ENCODE measurements at regions of chr1 and their contacts with region 1.

Region 1: GRCh38 chr1:156689035-156689952 is 12.1 kb upstream of the NES start:
- DNase-seq: peak; percentile 83
- H3K4me3 Mint-ChIP-seq: no peak overlapping the region
- H3K27ac Mint-ChIP-seq: no peak overlapping the region
- H3K4me1 Mint-ChIP-seq: peaks cover 16% of the 10 kb centered on the region
- H3K27me3 Mint-ChIP-seq: peaks cover 55% of the 10 kb centered on the region

Region 2: GRCh38 chr1:156394835-156395461 is 294.3 kb before region 1 on chr1:
- CTCF ChIA-PET with region 1: no interaction called
- POLR2A ChIA-PET with region 1: no interaction called
- intact Hi-C with region 1: no loop called
- DNase-seq: no peak
- H3K4me3 Mint-ChIP-seq: no peak overlapping the region
- H3K27ac Mint-ChIP-seq: no peak overlapping the region
- H3K4me1 Mint-ChIP-seq: no peaks in the 10 kb centered on the region
- H3K27me3 Mint-ChIP-seq: peaks cover 2% of the 10 kb centered on the region

Region 3: GRCh38 chr1:156625436-156626078 is 63.7 kb before region 1 on chr1:
- CTCF ChIA-PET with region 1: interaction called, 34 read pairs
- POLR2A ChIA-PET with region 1: no interaction called
- intact Hi-C with region 1: no loop called
- DNase-seq: peak; percentile 64
- H3K4me3 Mint-ChIP-seq: peak overlapping the region; percentile 48
- H3K27ac Mint-ChIP-seq: no peak overlapping the region
- H3K4me1 Mint-ChIP-seq: peaks cover 10% of the 10 kb centered on the region
- H3K27me3 Mint-ChIP-seq: peaks cover 46% of the 10 kb centered on the region

Region 4: DNA sequence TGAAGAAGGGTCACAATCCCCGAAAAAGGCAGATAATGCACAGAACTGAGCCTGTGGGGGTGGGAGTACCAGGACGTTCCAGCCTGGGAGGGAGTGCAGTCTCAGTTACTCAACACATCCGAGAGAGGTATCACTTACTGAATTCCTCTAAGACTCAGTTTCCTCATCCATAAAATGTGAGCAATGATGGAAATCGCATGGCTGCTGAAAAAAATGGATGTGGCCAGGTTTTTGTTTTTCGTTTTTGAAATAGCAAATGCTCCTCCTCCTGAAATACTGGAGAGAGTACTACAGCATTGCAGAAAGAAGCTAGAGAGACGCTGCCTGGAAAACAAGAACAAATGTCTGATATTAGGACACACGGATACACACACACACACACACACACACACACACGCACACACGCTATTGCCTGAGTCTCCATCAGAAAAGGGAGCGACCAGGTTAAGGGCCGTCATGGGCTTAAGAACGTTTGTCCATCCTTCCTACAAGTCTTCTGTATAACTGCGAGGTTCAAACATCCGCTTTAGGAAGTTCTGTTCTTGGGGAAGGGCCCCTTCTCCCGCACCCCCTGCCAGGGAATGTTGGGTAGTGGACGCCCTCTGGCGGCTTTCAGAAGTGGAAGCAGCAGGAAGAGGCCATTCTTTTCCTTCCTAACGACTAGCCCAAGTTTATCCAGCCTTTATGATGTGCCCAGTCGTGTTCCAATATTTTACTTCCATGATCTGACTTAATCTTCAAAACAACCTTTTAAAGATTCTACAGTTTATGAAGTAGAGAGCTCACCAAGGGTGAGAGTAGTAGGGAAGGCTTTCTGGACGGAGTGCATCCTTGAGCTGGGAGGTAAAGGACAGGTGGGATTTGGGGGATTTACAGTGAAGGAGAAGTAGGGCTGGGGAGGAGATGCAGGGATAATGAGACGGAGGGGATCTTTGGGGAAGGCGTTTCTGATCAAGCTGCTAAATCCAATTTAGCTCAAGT is 11.4 kb before region 1 on chr1:
- CTCF ChIA-PET with region 1: interaction called, 37 read pairs
- POLR2A ChIA-PET with region 1: no interaction called
- intact Hi-C with region 1: no loop called
- DNase-seq: peak; percentile 44
- H3K4me3 Mint-ChIP-seq: no peak overlapping the region
- H3K27ac Mint-ChIP-seq: no peak overlapping the region
- H3K4me1 Mint-ChIP-seq: peaks cover 12% of the 10 kb centered on the region
- H3K27me3 Mint-ChIP-seq: peaks cover 56% of the 10 kb centered on the region

Region 5: GRCh38 chr1:156740679-156741612 is 51.7 kb after region 1 on chr1 and contains the start of gene MRPL24:
- CTCF ChIA-PET with region 1: interaction called, 11 read pairs
- POLR2A ChIA-PET with region 1: no interaction called
- intact Hi-C with region 1: no loop called
- DNase-seq: peak; percentile 98
- H3K4me3 Mint-ChIP-seq: peak within 1 kb of the TSS; percentile 89
- H3K27ac Mint-ChIP-seq: peak within 1 kb of the TSS; percentile 95
- H3K4me1 Mint-ChIP-seq: peaks cover 47% of the 10 kb centered on the region
- H3K27me3 Mint-ChIP-seq: no peaks in the 10 kb centered on the region
- total RNA-seq, gene MRPL24: 105 to 106 TPM

Region 6: DNA sequence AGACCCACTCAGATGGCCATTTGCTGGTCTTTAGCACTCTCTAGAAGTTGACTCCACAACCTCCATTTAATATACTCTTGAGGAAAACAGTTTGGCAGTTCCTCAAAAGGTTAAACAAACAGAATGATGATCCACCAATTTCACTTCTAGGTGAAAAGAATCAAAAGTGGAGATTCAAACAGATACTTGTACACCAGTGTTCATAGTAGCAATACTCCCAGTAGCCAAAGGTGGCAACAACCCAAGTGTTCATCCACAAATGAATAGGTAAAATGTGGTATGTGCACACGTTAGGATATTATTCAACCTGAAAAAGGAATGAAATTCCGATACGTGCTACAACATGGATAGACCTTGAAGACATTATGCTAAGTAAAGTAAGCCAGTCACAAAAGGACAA is 84.3 kb after region 1 on chr1:
- CTCF ChIA-PET with region 1: interaction called, 21 read pairs
- POLR2A ChIA-PET with region 1: no interaction called
- intact Hi-C with region 1: no loop called
- DNase-seq: no peak
- H3K4me3 Mint-ChIP-seq: no peak overlapping the region
- H3K27ac Mint-ChIP-seq: peak overlapping the region; percentile 47
- H3K4me1 Mint-ChIP-seq: peaks cover 72% of the 10 kb centered on the region
- H3K27me3 Mint-ChIP-seq: no peaks in the 10 kb centered on the region

Region 7: GRCh38 chr1:156884560-156885184 is 195.4 kb after region 1 on chr1:
- CTCF ChIA-PET with region 1: interaction called, 58 read pairs
- POLR2A ChIA-PET with region 1: no interaction called
- intact Hi-C with region 1: no loop called
- DNase-seq: no peak
- H3K4me3 Mint-ChIP-seq: no peak overlapping the region
- H3K27ac Mint-ChIP-seq: no peak overlapping the region
- H3K4me1 Mint-ChIP-seq: no peaks in the 10 kb centered on the region
- H3K27me3 Mint-ChIP-seq: peaks cover 31% of the 10 kb centered on the region

Region 8: DNA sequence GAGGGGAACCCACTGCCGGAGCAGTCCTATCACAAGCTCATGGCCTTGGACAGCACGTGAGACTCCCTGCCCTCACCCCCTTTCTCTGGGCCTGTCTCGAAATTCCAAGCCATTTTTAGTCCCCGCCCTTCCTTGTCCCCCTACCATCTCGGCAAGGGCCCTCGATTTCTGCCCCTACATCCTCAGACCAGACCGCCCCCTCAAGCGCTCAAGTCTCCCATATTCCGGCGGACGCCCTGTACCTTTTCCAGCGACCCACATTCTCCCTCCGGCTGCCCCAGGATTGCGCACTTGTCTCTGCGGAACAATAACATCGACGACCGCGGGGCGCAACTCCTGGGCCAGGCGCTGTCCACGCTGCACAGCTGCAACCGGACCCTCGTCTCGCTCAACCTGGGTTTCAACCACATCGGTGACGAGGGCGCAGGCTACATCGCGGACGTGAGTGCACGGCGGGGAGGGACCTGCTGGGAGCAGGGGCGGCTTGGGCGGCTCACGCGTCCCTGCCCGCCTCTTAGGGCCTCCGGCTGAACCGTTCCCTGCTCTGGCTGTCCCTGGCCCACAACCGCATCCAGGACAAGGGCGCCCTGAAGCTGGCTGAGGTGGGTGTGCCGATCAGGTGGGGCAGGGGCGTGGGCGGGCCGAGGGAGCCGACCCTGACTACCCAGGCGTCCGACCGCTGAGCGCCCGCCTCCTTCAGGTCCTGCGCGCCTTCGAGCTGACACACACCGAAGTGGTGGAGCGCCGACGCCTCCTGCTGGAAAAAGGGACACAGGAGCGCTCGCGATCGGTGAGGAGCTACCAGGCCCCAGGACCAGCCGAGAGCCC is 238.1 kb after region 1 on chr1:
- CTCF ChIA-PET with region 1: interaction called, 18 read pairs
- POLR2A ChIA-PET with region 1: no interaction called
- intact Hi-C with region 1: no loop called
- DNase-seq: peak; percentile 79
- H3K4me3 Mint-ChIP-seq: no peak overlapping the region
- H3K27ac Mint-ChIP-seq: no peak overlapping the region
- H3K4me1 Mint-ChIP-seq: peaks cover 16% of the 10 kb centered on the region
- H3K27me3 Mint-ChIP-seq: peaks cover 75% of the 10 kb centered on the region

Region 9: GRCh38 chr1:157849229-157849875 is 1160.1 kb after region 1 on chr1:
- CTCF ChIA-PET with region 1: no interaction called
- POLR2A ChIA-PET with region 1: no interaction called
- intact Hi-C with region 1: no loop called
- DNase-seq: no peak
- H3K4me3 Mint-ChIP-seq: no peak overlapping the region
- H3K27ac Mint-ChIP-seq: no peak overlapping the region
- H3K4me1 Mint-ChIP-seq: no peaks in the 10 kb centered on the region
- H3K27me3 Mint-ChIP-seq: no peaks in the 10 kb centered on the region